Activated CD4-positive, alpha-beta T cell treated with anti-CD3 and anti-CD28 coated beads for 36 hours (primary cell): ENCODE measurements at regions of chr4 and their contacts with region 1.

Region 1: GRCh38 chr4:149031399-149031798 is 589.2 kb upstream of the NR3C2 start:
- DNase-seq: no peak
- ATAC-seq: no peak
- H3K4me3 Mint-ChIP-seq: no peak overlapping the region
- H3K27ac Mint-ChIP-seq: no peak overlapping the region
- H3K4me1 Mint-ChIP-seq: no peaks in the 10 kb centered on the region
- H3K27me3 Mint-ChIP-seq: no peaks in the 10 kb centered on the region

Region 2: GRCh38 chr4:147984065-147984777 is 1047.2 kb before region 1 on chr4:
- CTCF ChIA-PET with region 1: no interaction called
- POLR2A ChIA-PET with region 1: no interaction called
- intact Hi-C with region 1: loop called in 1 of 2 experiments (anchors 5 kb)
- DNase-seq: peak; percentile 29
- ATAC-seq: peak; percentile 69
- H3K4me3 Mint-ChIP-seq: no peak overlapping the region
- H3K27ac Mint-ChIP-seq: no peak overlapping the region
- H3K4me1 Mint-ChIP-seq: peaks cover 10% of the 10 kb centered on the region
- H3K27me3 Mint-ChIP-seq: no peaks in the 10 kb centered on the region